Activated T-helper 2 cell treated with anti-CD3 and anti-CD28 coated beads, Interferon-gamma antibody, Interleukin-2, Interleukin-4, amounts not matched to agents 10 μg/mL and 5 μg/mL and 100 μg/mL, durations not matched to agents 14 hours and 24 hours and 36 hours (primary cell): ENCODE measurements at regions of chr14 and their contacts with region 1.

Region 1: GRCh38 chr14:64503478-64504309 is at the start of gene ZBTB25:
- DNase-seq: peak; percentile 95
- H3K4me3 Mint-ChIP-seq: peak within 1 kb of the TSS; percentile 95
- H3K27ac Mint-ChIP-seq: peak within 1 kb of the TSS; percentile 99
- H3K4me1 Mint-ChIP-seq: peaks cover 57% of the 10 kb centered on the region
- H3K27me3 Mint-ChIP-seq: no peaks in the 10 kb centered on the region
- total RNA-seq, gene ZBTB25: 24.7 and 24.9 TPM in 2 replicates

Region 2: GRCh38 chr14:63470962-63471793 is 1032.5 kb before region 1 on chr14:
- intact Hi-C with region 1: loop called (anchors 10 kb)
- DNase-seq: no peak
- H3K4me3 Mint-ChIP-seq: peak overlapping the region; percentile 26
- H3K27ac Mint-ChIP-seq: peak overlapping the region; percentile 59
- H3K4me1 Mint-ChIP-seq: peaks cover 40% of the 10 kb centered on the region
- H3K27me3 Mint-ChIP-seq: no peaks in the 10 kb centered on the region

Region 3: DNA sequence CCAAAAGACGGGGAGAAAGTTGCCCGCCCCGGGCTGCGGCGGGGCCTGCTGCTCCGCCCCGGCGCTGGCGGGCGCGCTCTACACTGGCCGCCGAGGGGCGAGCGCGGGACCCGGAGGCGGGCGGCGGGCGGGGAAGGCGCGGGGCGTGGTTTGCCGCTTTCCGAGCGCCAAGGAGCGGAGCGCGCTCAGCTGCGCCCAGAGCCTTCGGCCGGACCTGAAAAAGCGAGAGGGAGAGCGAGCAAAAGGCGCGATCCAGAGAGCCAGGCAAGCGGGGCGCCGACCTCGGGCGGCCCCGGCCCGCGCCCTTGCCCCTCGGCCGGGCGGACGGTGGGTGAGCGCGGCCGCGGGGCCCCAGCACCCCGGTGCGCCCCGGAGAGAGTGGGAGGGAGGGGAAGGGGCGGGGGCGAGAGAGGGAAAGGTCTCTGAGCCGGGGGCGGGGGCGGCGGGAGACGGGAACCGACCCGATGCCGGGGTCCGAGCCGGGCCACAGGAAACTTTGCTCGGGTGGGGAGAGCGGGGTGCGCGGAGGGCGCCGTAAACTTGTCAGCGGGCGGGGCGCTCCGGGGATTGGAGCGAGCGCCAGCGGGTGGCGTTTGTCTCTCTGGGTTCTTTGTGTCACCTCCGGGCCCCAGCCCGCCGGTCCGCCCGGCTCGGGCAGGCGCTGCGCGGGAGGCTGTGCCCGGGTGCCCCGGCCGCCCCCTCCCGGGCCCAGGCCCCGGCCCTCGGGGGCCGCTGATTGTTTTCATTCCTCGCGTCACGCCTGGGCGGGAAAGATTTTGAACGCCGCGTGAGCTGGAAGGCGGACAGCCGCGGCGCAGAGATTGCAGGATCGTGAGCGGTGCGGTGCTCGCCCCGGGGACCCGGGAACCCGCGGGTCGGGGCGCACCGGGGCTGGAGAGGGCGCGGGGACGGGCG is 650.6 kb before region 1 on chr14 and contains the start of gene SYNE2:
- intact Hi-C with region 1: loop called (anchors 10 kb)
- DNase-seq: peak; percentile 76
- H3K4me3 Mint-ChIP-seq: peak within 1 kb of the TSS; percentile 93
- H3K27ac Mint-ChIP-seq: peak within 1 kb of the TSS; percentile 89
- H3K4me1 Mint-ChIP-seq: peaks cover 38% of the 10 kb centered on the region
- H3K27me3 Mint-ChIP-seq: peaks cover 46% of the 10 kb centered on the region
- total RNA-seq, gene SYNE2: 15.2 and 16.1 TPM in 2 replicates

Region 4: DNA sequence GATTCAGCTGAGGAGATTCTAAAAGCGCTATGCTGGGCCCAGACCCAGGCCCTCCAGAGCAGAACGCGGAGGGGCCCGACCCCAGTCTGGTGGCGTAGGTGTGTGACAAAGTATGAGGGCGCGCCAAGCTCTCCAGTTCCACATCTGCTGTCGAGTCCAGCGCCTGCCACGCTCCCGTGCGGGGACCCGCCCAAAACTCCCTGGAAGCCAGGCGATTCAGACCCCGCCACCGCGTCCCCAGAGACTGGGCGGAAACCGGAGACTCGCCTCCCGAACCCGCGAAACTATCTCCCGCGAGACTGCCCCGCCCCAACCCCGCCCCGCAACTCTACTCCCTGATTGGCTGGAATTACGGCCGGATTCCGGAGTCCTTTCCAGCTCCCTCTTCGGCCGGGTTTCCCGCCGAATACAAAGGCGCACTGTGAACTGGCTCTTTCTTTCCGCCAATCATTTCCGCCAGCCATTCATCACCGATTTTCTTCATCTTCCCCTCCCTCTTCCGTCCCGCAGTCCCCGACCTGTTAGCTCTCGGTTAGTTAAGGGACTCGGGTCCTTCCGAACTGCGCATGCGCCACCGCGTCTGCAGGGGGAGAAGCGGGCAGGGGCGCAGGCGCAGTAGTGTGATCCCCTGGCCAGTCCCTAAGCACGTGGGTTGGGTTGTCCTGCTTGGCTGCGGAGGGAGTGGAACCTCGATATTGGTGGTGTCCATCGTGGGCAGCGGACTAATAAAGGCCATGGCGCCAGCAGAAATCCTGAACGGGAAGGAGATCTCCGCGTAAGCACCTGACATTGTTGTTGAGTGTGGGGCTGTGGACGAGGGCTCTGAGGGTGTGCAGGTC is 115.8 kb before region 1 on chr14 and contains the start of gene MTHFD1:
- intact Hi-C with region 1: loop called (anchors 2 kb)
- DNase-seq: peak; percentile 97
- H3K4me3 Mint-ChIP-seq: peak within 1 kb of the TSS; percentile 86
- H3K27ac Mint-ChIP-seq: peak within 1 kb of the TSS; percentile 92
- H3K4me1 Mint-ChIP-seq: peaks cover 33% of the 10 kb centered on the region
- H3K27me3 Mint-ChIP-seq: no peaks in the 10 kb centered on the region
- total RNA-seq, gene MTHFD1: 291 and 309 TPM in 2 replicates

Region 5: DNA sequence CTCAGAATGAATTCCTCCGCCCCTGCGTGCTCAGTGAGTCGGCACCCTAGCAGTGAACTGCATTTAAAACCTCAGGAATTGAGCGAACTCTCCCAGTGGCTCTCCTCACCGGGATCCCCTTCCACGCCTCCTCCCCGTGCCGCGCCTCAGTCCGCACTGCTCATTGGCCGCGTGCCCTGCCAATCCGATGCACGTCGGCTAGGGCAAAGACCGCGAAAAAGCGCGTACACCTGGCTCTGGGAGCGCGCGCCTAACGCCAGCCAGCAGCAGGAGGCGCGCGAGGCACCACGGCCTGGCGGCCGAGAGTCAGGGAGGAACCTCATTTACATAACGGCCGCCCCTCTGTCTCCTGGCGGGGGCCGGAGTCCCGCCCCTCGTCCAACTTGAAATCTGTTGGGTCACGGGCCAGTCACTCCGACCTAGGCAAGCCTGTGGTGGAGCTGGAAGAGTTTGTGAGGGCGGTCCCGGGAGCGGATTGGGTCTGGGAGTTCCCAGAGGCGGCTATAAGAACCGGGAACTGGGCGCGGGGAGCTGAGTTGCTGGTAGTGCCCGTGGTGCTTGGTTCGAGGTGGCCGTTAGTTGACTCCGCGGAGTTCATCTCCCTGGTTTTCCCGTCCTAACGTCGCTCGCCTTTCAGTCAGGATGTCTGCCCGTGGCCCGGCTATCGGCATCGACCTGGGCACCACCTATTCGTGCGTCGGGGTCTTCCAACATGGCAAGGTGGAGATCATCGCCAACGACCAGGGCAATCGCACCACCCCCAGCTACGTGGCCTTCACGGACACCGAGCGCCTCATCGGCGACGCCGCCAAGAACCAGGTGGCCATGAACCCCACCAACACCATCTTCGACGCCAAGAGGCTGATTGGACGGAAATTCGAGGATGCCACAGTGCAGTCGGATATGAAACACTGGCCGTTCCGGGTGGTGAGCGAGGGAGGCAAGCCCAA is 36.8 kb after region 1 on chr14 and contains the start of gene HSPA2:
- intact Hi-C with region 1: loop called (anchors 1 kb)
- DNase-seq: peak; percentile 95
- H3K4me3 Mint-ChIP-seq: peak within 1 kb of the TSS; percentile 93
- H3K27ac Mint-ChIP-seq: peak within 1 kb of the TSS; percentile 78
- H3K4me1 Mint-ChIP-seq: peaks cover 27% of the 10 kb centered on the region
- H3K27me3 Mint-ChIP-seq: peaks cover 42% of the 10 kb centered on the region
- total RNA-seq, gene HSPA2: 6.6 and 7.1 TPM in 2 replicates

Region 6: DNA sequence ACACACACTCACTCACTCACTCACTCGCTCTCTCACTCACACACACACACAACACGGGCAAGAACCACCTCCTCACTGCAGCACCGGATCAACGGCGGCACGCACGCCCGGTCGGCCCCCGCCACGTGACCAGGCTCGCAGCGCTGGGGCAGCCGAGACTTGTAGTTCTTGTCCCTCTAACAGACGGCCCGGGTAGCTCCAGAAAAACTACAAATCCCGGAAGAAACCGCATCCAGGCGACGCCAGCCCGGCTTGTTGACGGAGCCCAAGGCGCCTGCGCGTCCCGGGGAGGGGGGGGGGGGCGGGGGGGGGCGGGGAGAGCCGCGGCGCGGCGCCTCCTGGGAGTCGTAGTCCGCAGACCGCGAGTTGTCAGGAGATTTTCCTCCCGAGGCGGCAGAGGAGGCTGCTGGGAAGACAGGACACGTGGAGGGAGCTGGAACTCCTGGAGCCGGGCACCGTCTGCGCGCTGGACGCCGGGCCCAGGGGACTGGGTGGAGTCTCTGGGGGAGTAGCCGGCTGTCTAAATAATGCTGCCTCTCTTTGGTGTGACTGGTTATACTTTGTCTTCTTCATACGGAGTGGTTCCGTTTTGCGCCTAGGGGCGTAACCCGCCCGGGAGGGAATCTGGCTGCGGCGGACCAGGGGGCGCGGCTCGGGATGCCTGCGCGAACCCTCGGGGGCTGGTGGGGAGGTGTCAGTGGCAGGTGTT is 598.9 kb after region 1 on chr14 and contains the start of gene MAX:
- intact Hi-C with region 1: loop called (anchors 5 kb)
- DNase-seq: peak; percentile 99
- H3K4me3 Mint-ChIP-seq: peak within 1 kb of the TSS; percentile 92
- H3K27ac Mint-ChIP-seq: peak within 1 kb of the TSS; percentile 94
- H3K4me1 Mint-ChIP-seq: peaks cover 40% of the 10 kb centered on the region
- H3K27me3 Mint-ChIP-seq: peaks cover 6% of the 10 kb centered on the region
- total RNA-seq, gene MAX: 113 and 115 TPM in 2 replicates